ENCODE measurements at regions of chr13 and their contacts with region 1.

Region 1: GRCh38 chr13:21282065-21282464 is 105.6 kb downstream of the MRPL57 start:
- DNase-seq: no peak
- H3K4me3 ChIP-seq: no peak overlapping the region
- H3K27ac ChIP-seq: no peak overlapping the region
- H3K4me1 ChIP-seq: no peaks in the 10 kb centered on the region
- H3K27me3 ChIP-seq: no peaks in the 10 kb centered on the region
- CTCF ChIP-seq: no peak

Region 2: GRCh38 chr13:21225841-21226581 is 56.1 kb before region 1 on chr13:
- CTCF ChIA-PET with region 1: no interaction called
- dilution Hi-C with region 1: loop called (anchors 5 kb)
- in situ Hi-C with region 1: no loop called
- intact Hi-C with region 1: no loop called
- DNase-seq: no peak
- H3K4me3 ChIP-seq: no peak overlapping the region
- H3K27ac ChIP-seq: no peak overlapping the region
- H3K4me1 ChIP-seq: no peaks in the 10 kb centered on the region
- H3K27me3 ChIP-seq: no peaks in the 10 kb centered on the region
- CTCF ChIP-seq: no peak

Region 3: DNA sequence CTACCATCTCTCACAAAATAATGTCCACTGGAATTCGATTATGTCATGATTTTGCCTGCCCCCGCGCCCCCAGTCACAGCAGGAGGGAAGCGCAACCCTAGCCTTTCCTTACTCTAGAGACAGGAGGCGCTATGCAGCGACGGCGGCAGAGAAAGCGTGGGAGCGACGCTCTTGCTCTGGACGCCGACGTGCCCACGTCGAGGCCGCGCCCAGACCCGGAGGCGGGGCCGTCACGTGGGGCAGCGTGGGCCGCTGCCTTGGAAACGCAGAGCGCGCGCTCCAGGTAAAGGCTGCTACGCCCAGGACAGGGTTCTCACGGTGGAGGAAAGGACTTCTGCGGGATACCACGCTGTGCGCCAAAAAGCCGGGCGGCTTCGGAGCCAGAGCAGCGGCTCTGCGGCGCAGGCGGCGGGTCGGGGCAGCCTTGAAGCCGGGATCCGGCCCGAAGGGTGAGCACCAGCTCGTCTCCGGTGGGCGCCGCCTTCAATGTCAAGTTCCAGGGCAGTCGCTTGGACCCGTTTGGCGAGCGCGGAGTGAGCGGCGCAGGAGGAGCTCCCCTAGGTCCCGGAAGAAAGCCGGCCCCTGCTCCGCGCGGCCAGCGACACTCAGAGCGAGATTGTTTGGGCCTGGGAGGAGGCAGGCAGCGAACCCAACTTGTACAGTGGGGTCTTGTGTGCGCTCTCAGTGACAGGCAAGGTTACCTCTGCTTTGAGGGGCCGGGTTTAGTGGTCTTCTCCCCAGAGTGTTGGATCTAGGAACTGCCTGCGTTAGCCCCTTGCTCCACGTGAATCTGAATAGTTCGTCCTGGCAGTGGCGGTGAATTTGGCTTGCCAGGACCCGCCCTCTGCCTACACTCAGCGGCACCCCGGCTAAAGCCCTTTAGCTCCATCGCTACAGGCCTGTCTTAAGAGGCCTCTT is 16.1 kb after region 1 on chr13:
- CTCF ChIA-PET with region 1: no interaction called
- dilution Hi-C with region 1: no loop called
- in situ Hi-C with region 1: no loop called
- intact Hi-C with region 1: no loop called
- DNase-seq: peak; percentile 93
- H3K4me3 ChIP-seq: peak overlapping the region; percentile 86 to 96 (median 90)
- H3K27ac ChIP-seq: peak overlapping the region; percentile 91
- H3K4me1 ChIP-seq: peaks cover 9% of the 10 kb centered on the region
- H3K27me3 ChIP-seq: no peaks in the 10 kb centered on the region
- CTCF ChIP-seq: peak; percentile 86 to 94

Region 4: GRCh38 chr13:21625366-21625765 is 343.3 kb after region 1 on chr13:
- CTCF ChIA-PET with region 1: no interaction called
- dilution Hi-C with region 1: no loop called
- in situ Hi-C with region 1: no loop called
- intact Hi-C with region 1: no loop called
- DNase-seq: peak; percentile 53
- H3K4me3 ChIP-seq: no peak overlapping the region
- H3K27ac ChIP-seq: no peak overlapping the region
- H3K4me1 ChIP-seq: peaks cover 3% of the 10 kb centered on the region
- H3K27me3 ChIP-seq: no peaks in the 10 kb centered on the region
- CTCF ChIP-seq: peak; percentile 59 to 76

Measured in mammary epithelial cell (primary cell).